ENCODE measurements at regions of chr5 and their contacts with region 1.

Region 1: GRCh38 chr5:147949711-147950573 is 43.6 kb upstream of the C5orf46 start:
- DNase-seq: no peak
- ATAC-seq: peak in 1 of 4 donors; percentile 41
- H3K4me3 ChIP-seq: no peak overlapping the region
- H3K27ac ChIP-seq: no peak overlapping the region
- H3K4me1 ChIP-seq: no peaks in the 10 kb centered on the region
- H3K27me3 ChIP-seq: no peaks in the 10 kb centered on the region
- CTCF ChIP-seq: peak; percentile 56

Region 2: GRCh38 chr5:148090773-148091221 is 140.9 kb after region 1 on chr5:
- intact Hi-C with region 1: loop called in 1 of 2 experiments (anchors 10 kb)
- DNase-seq: no peak
- ATAC-seq: no peak
- H3K4me3 ChIP-seq: no peak overlapping the region
- H3K27ac ChIP-seq: no peak overlapping the region
- H3K4me1 ChIP-seq: no peaks in the 10 kb centered on the region
- H3K27me3 ChIP-seq: no peaks in the 10 kb centered on the region
- CTCF ChIP-seq: no peak